T-cell (primary cell): ENCODE measurements at regions of chr2 and their contacts with region 1.

Region 1: GRCh38 chr2:169775765-169776164 is 22.9 kb upstream of the SSB start:
- DNase-seq: no peak
- ATAC-seq: no peak
- H3K4me3 ChIP-seq: no peak overlapping the region
- H3K4me3 Mint-ChIP-seq: no peak overlapping the region
- H3K27ac ChIP-seq: no peak overlapping the region
- H3K27ac Mint-ChIP-seq: no peak overlapping the region
- H3K4me1 ChIP-seq: no peaks in the 10 kb centered on the region
- H3K4me1 Mint-ChIP-seq: no peaks in the 10 kb centered on the region
- H3K27me3 ChIP-seq: peaks cover 0 to 3% of the 10 kb centered on the region in 2 experiments
- H3K27me3 Mint-ChIP-seq: no peaks in the 10 kb centered on the region

Region 2: DNA sequence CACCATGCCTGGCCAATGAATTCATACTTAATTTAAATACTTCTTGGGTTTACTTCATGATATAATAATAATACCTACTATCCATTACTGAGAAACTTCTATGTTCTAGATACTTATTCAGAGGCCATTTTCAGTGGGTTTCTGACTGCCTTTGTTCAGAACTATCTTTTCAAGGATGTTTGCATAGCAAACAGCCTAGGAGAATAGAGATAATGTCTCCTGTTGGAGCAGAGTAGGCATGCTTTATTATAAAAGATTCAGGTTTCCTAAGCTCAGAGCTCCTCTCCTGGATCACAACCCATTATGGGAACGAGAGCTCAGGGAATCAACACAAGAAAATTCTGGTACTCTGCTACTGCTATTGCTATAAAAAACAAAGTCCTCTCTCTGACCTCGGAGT is 213.2 kb before region 1 on chr2:
- CTCF ChIA-PET with region 1: interaction called in 1 of 2 experiments, 14 read pairs
- POLR2A ChIA-PET with region 1: no interaction called
- DNase-seq: no peak
- ATAC-seq: peak; percentile 37 to 53 (median 45)
- H3K4me3 ChIP-seq: no peak overlapping the region
- H3K4me3 Mint-ChIP-seq: no peak overlapping the region
- H3K27ac ChIP-seq: no peak overlapping the region
- H3K27ac Mint-ChIP-seq: no peak overlapping the region
- H3K4me1 ChIP-seq: no peaks in the 10 kb centered on the region
- H3K4me1 Mint-ChIP-seq: no peaks in the 10 kb centered on the region
- H3K27me3 ChIP-seq: no peaks in the 10 kb centered on the region
- H3K27me3 Mint-ChIP-seq: no peaks in the 10 kb centered on the region

Region 3: GRCh38 chr2:169659320-169659719 is 116.4 kb before region 1 on chr2:
- CTCF ChIA-PET with region 1: no interaction called
- POLR2A ChIA-PET with region 1: no interaction called
- DNase-seq: no peak
- ATAC-seq: no peak
- H3K4me3 ChIP-seq: no peak overlapping the region
- H3K4me3 Mint-ChIP-seq: no peak overlapping the region
- H3K27ac ChIP-seq: no peak overlapping the region
- H3K27ac Mint-ChIP-seq: no peak overlapping the region
- H3K4me1 ChIP-seq: no peaks in the 10 kb centered on the region
- H3K4me1 Mint-ChIP-seq: no peaks in the 10 kb centered on the region
- H3K27me3 ChIP-seq: peaks cover 0 to 4% of the 10 kb centered on the region in 2 experiments
- H3K27me3 Mint-ChIP-seq: peaks cover 5 to 7% of the 10 kb centered on the region in 2 donors